Activated T-helper 1 cell treated with anti-CD3 and anti-CD28 coated beads, Interleukin-12 subunit alpha, Interleukin-12 subunit beta, Interleukin-2, Interleukin-4 antibody, amounts not matched to agents 30 ng/mL and 10 ng/mL and 1 ng/mL, durations not matched to agents 14 hours and 24 hours and 36 hours (primary cell): ENCODE measurements at regions of chrX and their contacts with region 1.

Region 1: DNA sequence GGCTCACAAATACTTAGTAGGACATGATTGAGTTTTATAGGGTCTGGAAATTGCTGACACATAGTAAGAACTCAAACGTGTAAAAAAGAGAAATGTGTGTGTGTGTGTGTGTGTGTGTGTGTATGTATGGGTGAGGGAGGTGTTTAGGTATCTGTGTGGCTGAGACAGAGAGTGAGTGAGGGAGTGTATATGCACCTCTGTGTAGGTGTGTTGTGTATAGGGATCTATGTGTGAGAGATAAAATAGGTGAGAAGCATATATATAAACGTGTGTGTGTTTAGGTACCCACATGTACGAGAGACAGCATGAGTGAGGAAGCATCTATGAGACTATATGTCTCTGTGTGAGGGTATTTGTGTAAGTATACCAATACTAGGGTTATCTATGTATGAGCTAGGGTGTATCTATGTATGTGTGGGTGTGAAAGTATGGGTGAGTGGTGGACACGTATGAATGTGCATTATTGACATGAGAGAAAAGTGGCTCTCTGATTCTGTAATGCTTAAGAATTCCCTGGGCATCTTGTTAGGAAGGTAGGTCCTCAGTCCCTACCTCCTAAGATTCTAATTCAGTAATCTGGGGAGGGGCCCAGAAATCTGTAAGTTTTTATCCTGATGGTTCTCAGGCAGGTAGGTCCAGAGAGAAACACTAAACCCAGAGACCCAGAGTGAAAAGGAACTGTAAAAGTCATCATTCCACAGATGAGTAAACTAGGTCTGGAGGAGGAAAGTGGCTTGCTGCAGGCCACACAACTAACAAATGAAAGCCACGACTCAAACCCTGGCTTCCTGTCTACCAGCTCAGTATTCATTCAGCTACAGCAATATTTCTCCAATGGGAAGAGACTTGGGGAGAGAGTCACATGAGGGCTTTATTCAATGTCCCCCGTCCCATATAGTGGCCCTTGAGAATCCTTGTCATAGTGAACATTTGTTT is 237.0 kb downstream of the IDS start:
- DNase-seq: no peak
- H3K4me3 Mint-ChIP-seq: no peak overlapping the region
- H3K27ac Mint-ChIP-seq: peak overlapping the region; percentile 3
- H3K4me1 Mint-ChIP-seq: peaks cover 16% of the 10 kb centered on the region
- H3K27me3 Mint-ChIP-seq: peaks cover 6% of the 10 kb centered on the region

Region 2: DNA sequence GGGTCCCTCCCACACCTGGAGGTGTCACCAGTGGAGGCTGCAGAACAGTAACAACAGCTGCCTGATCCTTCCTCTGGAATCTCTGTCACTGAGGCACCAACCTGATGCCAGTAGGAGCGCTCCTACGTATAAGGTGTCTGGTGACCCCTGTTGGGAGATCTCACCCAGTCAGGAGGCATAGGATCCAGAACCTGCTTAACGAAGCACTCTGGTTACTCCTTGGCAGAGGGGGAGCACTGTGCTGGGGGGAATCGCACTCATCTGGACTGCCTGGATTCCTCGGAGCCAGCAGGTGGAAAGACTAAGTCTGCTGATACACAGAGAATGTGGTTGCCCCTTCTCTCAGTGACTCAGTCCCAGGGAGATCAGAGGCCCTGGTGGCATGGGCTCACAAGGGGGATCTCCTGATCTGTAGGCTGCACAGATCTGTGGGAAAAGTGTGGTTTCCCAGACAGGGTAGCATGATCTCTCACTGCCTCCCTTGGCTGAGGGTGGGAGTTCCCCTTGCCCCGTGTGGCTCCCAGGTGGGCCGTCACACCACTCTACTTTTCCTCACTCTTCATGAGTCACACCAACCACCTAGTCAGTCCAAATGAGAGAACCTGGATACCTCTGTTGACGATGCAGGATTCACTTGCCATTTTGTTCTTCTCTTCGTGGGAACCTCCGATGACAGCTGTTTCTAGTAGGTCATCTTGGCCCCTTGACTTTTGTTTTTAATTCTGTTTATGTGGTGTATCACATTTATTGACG is 69.0 kb before region 1 on chrX:
- intact Hi-C with region 1: loop called (anchors 1 kb)
- DNase-seq: no peak
- H3K4me3 Mint-ChIP-seq: no peak overlapping the region
- H3K27ac Mint-ChIP-seq: peak overlapping the region; percentile 16
- H3K4me1 Mint-ChIP-seq: peaks cover 4% of the 10 kb centered on the region
- H3K27me3 Mint-ChIP-seq: peaks cover 1% of the 10 kb centered on the region

Region 3: GRCh38 chrX:149230689-149231088 is 37.5 kb before region 1 on chrX:
- intact Hi-C with region 1: loop called (anchors 1 kb)
- DNase-seq: no peak
- H3K4me3 Mint-ChIP-seq: no peak overlapping the region
- H3K27ac Mint-ChIP-seq: peak overlapping the region; percentile 87
- H3K4me1 Mint-ChIP-seq: peaks cover 9% of the 10 kb centered on the region
- H3K27me3 Mint-ChIP-seq: peaks cover 1% of the 10 kb centered on the region